Lower leg skin (tissue), 4 donors: ENCODE measurements at regions of chr13 and their contacts with region 1.

Region 1: GRCh38 chr13:40692946-40693345 is 26.5 kb upstream of the FOXO1 start:
- DNase-seq: no peak
- H3K4me3 ChIP-seq: no peak overlapping the region
- CTCF ChIP-seq: no peak
- POLR2A ChIP-seq: no peak

Region 2: DNA sequence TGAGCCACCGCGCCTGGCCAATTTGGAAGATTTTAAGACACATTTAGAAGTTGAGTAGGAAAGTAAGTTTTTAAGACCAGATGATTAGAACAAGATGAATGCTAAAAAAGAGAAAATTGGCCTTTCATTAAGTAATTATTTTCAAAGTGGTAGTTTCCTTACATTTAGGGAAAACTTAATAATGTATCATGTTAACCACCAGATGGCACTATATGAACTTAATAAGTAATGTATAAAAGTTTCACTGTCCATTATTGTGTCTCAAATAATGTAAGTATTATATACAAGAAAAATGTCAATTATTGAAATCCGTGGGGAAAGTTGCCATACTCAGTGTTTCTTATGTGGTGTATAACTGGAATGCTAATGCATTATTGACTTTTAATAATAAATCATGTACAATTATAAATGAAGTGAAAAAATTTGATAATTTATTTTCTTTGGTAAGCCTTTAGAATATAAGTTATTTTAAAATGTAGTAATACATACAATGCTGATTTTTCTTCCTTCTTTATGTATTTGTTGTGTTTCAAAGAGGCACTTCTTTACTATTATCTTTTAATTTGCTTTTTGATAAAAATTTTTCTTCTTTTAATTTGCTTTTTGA is 1008.3 kb before region 1 on chr13:
- intact Hi-C with region 1: loop called (anchors 10 kb)
- DNase-seq: no peak
- H3K4me3 ChIP-seq: no peak overlapping the region
- CTCF ChIP-seq: no peak
- POLR2A ChIP-seq: no peak

Region 3: DNA sequence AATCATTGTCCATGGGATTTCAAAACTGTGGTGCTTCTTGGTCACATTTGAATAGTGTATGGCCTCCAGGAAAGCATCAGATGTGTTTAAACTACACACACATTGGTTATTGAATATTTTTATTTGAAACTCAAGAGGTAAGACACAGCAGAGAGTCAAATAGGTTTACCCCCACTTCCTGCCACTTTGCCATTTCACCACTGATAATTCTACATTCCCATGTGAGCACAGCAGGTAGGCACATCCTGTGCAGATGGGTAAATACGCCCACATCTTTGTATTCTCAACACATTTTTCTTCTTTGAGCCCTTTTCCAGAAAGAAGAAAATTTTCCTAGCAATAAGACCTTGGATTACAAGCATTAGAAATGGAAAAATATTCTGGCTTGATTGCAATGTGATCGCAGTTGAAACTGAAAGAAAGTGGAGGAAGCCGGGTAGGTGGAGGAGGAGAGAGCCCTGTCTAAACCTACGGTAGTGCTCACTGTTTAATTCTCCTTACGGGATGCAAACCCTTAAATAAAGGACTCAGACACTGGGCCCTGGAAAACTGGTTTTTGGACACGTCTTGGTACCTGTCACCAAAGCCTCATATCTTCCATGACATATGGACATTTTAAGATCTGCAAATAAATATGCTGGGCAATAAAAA is 869.8 kb before region 1 on chr13:
- intact Hi-C with region 1: no loop called
- DNase-seq: no peak
- H3K4me3 ChIP-seq: no peak overlapping the region
- CTCF ChIP-seq: no peak
- POLR2A ChIP-seq: no peak